Panc1 (cell line): ENCODE measurements at regions of chr14 and their contacts with region 1.

Region 1: DNA sequence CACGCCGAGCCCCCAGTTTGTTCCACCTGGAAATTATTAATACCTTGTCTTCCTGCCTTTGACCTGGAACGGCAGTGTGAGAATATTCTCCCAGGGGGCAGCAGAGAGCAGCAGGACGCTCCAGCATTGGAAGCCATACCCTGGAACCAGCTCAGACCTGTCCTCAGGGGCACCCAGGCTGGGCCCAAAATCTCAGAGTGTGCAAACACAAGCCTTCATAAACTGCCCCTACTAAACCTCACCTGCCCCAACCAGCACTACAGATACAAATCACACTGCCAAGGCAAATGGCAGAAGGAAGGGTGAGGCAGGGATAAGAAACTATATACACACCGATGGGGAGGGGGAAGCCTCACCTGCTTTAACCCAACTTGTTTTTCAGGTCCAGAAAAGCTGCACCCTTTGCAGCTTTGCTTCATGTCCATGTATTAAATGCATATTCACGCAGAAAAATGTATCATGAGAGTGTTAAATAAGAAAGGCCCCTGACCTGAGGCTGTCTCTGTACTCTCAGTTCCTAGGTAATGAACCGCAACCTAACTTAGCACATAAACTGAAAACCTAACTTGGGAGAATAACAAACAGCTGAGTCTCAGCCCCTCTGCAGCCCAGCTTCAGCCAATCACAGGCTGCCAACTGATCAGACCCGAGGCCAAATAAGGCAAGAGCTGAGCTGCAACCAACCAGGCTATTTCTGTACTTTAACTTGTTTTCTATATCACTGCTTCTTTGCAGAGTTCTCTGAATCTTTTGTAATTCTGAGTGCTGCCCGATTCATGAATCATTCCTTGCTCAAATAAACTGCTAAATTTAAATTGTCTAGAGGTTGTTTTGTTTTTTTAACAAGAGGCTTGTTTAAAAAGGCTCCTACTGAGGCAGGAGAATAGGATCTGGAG is 130.1 kb downstream of the SPTSSA start:
- DNase-seq: peak; percentile 22
- ATAC-seq: peak; percentile 93
- H3K4me3 ChIP-seq: peak overlapping the region in 1 of 2 experiments; percentile 13; a peak in 2 of 4 replicates
- H3K27ac ChIP-seq: 0 out of 2 replicates have a peak overlapping the region, but pooled peaks have one; percentile 48
- H3K4me1 ChIP-seq: no peaks in the 10 kb centered on the region; the same call in 1 of the 2 replicates
- H3K27me3 ChIP-seq: no peaks in the 10 kb centered on the region
- CTCF ChIP-seq: peak; percentile 88

Region 2: DNA sequence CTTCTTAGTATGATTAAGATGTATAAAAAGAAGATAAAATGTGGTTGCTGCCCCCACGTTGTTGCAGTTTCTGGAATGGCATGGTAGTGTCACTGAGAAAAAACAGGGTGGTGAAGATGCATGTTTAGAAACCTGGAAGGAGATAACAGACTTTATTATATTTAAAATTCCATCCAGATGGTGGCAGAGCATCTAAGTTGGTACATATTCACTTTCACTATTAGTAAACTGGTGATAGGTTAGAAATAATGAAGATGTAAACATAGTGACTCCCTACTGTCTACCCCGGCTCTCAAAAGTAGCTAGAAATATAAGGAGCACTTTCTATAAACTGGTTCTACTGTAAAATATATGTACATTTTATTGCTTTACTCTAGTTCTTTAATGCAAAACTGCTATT is 1113.9 kb before region 1 on chr14:
- CTCF ChIA-PET with region 1: no interaction called
- POLR2A ChIA-PET with region 1: no interaction called
- in situ Hi-C with region 1: no loop called
- intact Hi-C with region 1: no loop called
- DNase-seq: no peak
- ATAC-seq: no peak
- H3K4me3 ChIP-seq: no peak overlapping the region
- H3K27ac ChIP-seq: no peak overlapping the region
- H3K4me1 ChIP-seq: no peaks in the 10 kb centered on the region
- H3K27me3 ChIP-seq: no peaks in the 10 kb centered on the region
- CTCF ChIP-seq: no peak

Region 3: DNA sequence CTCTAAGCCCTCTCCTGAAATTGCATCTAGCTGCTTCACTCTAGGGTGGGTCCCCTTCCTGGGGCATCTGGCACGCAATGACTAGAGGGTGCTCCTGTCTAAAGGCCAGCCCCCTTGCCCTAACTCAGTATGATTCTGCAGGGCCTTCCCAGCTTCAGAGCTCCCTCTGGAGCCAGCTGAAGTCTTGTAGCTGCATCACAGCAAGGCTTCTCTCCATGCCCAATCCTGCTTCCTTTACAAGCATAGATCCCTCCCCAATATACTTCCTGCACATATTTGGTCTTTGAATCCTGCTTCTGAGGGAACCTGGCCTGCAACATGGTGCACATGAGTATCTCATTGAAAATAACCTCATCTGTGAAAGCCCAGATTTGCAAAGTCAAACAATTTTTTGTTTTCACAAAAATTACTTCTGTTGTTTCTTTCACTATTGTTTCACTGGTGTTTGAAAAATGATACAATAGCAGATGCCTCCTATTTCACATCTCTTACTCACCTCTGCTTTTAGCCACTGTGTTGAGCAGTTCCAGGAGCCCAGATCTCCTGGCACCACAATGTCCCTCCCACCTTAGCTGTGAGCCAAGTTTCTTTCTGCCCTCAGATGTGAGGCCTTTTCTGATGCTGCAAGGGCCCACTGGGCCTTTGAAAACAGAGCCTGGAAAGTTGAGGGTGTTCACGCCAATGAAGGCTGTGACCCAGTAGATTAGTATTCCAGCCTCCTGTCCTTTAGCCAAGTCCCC is 211.6 kb before region 1 on chr14:
- CTCF ChIA-PET with region 1: interaction called, 10 read pairs
- POLR2A ChIA-PET with region 1: no interaction called
- in situ Hi-C with region 1: no loop called
- intact Hi-C with region 1: no loop called
- DNase-seq: no peak
- ATAC-seq: no peak
- H3K4me3 ChIP-seq: no peak overlapping the region
- H3K27ac ChIP-seq: no peak overlapping the region
- H3K4me1 ChIP-seq: no peaks in the 10 kb centered on the region
- H3K27me3 ChIP-seq: no peaks in the 10 kb centered on the region
- CTCF ChIP-seq: no peak

Region 4: GRCh38 chr14:34136996-34137745 is 194.8 kb before region 1 on chr14:
- CTCF ChIA-PET with region 1: no interaction called
- POLR2A ChIA-PET with region 1: no interaction called
- in situ Hi-C with region 1: no loop called
- intact Hi-C with region 1: no loop called
- DNase-seq: no peak
- ATAC-seq: no peak
- H3K4me3 ChIP-seq: no peak overlapping the region
- H3K27ac ChIP-seq: no peak overlapping the region
- H3K4me1 ChIP-seq: no peaks in the 10 kb centered on the region
- H3K27me3 ChIP-seq: no peaks in the 10 kb centered on the region
- CTCF ChIP-seq: no peak

Region 5: GRCh38 chr14:34355584-34356263 is 23.7 kb after region 1 on chr14:
- CTCF ChIA-PET with region 1: no interaction called
- POLR2A ChIA-PET with region 1: no interaction called
- in situ Hi-C with region 1: no loop called
- intact Hi-C with region 1: no loop called
- DNase-seq: no peak
- ATAC-seq: peak; percentile 66; the same call in 1 of the 2 replicates
- H3K4me3 ChIP-seq: no peak overlapping the region
- H3K27ac ChIP-seq: no peak overlapping the region
- H3K4me1 ChIP-seq: peaks cover 4% of the 10 kb centered on the region; the same call in 1 of the 2 replicates
- H3K27me3 ChIP-seq: no peaks in the 10 kb centered on the region
- CTCF ChIP-seq: no peak

Region 6: DNA sequence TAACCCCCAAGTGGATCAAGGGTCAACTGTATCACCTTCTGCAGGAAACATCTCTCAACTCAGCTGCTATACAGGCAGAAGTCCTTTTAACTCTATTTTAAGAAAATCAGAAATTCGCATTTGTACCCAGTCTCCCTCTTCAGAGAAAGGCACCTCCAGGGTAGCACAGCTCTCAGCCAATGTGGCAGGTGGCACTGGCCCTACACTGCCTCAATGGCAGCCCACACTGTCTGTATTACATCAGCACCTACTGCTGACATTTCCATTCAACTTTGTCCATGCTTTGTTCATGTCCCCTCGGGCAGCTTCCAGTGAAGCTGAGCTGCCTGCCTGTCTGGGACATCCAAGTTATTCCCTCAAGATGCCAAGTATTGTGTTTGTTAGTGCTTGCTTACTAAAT is 121.3 kb after region 1 on chr14:
- CTCF ChIA-PET with region 1: interaction called, 11 read pairs
- POLR2A ChIA-PET with region 1: no interaction called
- in situ Hi-C with region 1: no loop called
- intact Hi-C with region 1: no loop called
- DNase-seq: no peak
- ATAC-seq: no peak
- H3K4me3 ChIP-seq: no peak overlapping the region
- H3K27ac ChIP-seq: no peak overlapping the region
- H3K4me1 ChIP-seq: no peaks in the 10 kb centered on the region
- H3K27me3 ChIP-seq: no peaks in the 10 kb centered on the region
- CTCF ChIP-seq: no peak

Region 7: DNA sequence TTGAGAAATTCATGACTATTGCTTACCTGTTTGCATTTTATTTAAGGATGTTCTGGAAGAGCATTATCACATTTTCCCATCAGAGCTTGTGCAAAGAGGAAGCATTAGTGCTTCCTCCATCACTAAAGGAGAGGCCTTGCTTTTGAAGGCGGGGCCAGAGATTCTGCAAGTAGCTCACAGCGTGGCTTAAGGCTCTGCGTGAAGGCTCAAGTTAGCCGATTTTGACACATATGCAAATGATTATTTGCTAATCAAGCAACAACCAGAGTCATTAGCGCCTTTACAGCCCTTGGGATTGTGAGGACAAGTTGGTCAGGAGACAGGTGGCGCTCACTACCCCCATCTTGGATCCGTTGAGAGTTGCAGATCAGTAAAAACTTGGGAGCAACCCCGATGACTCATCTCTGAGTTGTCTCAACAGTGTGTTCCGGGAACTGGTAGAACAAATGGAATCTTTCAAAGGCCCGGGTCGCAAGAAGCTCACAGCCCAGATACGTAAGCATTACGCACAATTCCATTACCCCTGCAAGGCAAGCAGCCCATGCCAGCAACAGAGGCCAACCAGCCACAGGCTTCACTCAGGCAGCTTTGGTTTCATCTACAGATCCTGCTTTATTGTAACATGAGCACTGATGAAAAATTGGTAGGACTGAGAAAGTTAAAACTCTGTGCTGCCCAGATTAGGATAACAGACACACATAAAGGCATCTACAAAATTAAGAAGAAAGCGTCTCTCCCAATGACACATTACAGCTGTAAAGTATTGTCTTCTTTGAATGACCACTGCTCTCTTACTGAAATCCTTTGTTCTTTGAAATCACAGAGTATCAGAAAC is 164.9 kb after region 1 on chr14:
- CTCF ChIA-PET with region 1: interaction called, 15 read pairs
- POLR2A ChIA-PET with region 1: interaction called, 5 read pairs
- in situ Hi-C with region 1: no loop called
- intact Hi-C with region 1: loop called (anchors 1 kb)
- DNase-seq: peak; percentile 85
- ATAC-seq: peak; percentile 91
- H3K4me3 ChIP-seq: peak overlapping the region in 1 of 2 experiments; percentile 39; a peak in 2 of 4 replicates
- H3K27ac ChIP-seq: peak overlapping the region; percentile 75
- H3K4me1 ChIP-seq: peaks cover 15% of the 10 kb centered on the region
- H3K27me3 ChIP-seq: no peaks in the 10 kb centered on the region
- CTCF ChIP-seq: no peak

Region 8: GRCh38 chr14:34875031-34875922 is 543.3 kb after region 1 on chr14 and contains the start of gene BAZ1A:
- CTCF ChIA-PET with region 1: no interaction called
- POLR2A ChIA-PET with region 1: no interaction called
- in situ Hi-C with region 1: no loop called
- intact Hi-C with region 1: no loop called
- DNase-seq: no peak
- ATAC-seq: peak; percentile 76
- H3K4me3 ChIP-seq: peak within 1 kb of the TSS; percentile 72 to 82
- H3K27ac ChIP-seq: peak within 1 kb of the TSS; percentile 88
- H3K4me1 ChIP-seq: peaks cover 7% of the 10 kb centered on the region
- H3K27me3 ChIP-seq: no peaks in the 10 kb centered on the region
- CTCF ChIP-seq: no peak
- total RNA-seq, gene BAZ1A: 27.2 TPM